ENCODE measurements at regions of chr13 and their contacts with region 1.

Region 1: DNA sequence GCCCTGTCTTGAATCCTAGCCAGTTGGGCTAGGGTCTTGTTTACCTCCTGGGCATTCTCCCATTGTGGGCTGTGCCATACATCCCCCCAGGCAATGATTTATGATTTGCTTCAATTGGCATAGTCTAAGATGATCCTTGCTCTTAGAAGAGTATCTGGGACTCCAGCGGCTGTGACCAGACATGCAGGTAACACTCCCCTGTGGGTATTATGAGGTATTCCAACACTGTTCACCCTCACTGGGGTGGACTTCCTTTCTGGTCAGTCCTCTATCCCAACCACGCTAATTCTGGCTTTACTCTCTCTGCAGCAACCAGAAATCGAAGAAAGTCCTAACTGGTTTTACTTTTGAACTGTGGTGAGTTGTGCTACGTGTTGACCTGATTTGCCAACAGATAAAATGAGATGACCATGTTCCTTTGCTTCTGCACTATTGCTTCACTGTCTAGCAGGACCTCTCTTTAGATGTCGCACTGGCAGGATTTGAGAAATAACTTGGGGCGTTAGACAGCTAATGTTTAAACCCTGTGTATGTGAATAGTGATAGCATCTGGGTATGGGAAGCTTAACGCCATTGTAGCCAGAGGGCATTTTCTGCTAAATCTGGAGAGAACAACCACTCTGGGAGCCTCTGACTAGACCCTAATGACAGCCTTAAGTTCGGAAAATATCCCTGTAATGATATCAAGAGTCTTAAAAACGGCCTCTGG is 6.7 kb upstream of the LRCH1 start:
- DNase-seq: no peak
- ATAC-seq: no peak
- H3K4me3 ChIP-seq: no peak overlapping the region
- H3K27ac ChIP-seq: no peak overlapping the region
- H3K4me1 ChIP-seq: no peaks in the 10 kb centered on the region
- H3K27me3 ChIP-seq: no peaks in the 10 kb centered on the region
- CTCF ChIP-seq: no peak

Region 2: DNA sequence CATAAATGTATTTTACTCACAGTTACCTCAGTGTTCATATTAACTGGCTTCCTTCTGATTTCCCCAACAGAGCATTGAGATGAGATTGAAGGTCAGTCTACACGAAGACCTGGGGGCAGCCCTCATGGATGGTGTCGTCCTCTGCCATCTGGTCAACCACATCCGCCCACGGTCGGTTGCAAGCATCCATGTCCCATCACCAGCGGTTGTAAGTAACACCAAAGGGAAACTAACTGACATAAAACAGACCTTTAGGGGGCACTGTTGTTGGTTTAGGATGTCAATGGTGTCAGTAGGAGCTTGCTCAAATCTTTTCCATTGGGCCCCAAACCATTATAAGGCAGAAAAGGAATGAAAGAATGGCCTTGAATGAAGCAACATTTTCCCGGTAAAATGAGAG is 182.5 kb after region 1 on chr13:
- intact Hi-C with region 1: loop called in 1 of 2 experiments (anchors 5 kb)
- DNase-seq: no peak
- ATAC-seq: no peak
- H3K4me3 ChIP-seq: no peak overlapping the region
- H3K27ac ChIP-seq: no peak overlapping the region
- H3K4me1 ChIP-seq: no peaks in the 10 kb centered on the region
- H3K27me3 ChIP-seq: no peaks in the 10 kb centered on the region
- CTCF ChIP-seq: no peak

Region 3: GRCh38 chr13:47337781-47338507 is 791.7 kb after region 1 on chr13:
- intact Hi-C with region 1: no loop called
- DNase-seq: no peak
- ATAC-seq: no peak
- H3K4me3 ChIP-seq: no peak overlapping the region
- H3K27ac ChIP-seq: no peak overlapping the region
- H3K4me1 ChIP-seq: no peaks in the 10 kb centered on the region
- H3K27me3 ChIP-seq: no peaks in the 10 kb centered on the region
- CTCF ChIP-seq: no peak

Measured in psoas muscle (tissue), 8 donors.